Naive thymus-derived CD4-positive, alpha-beta T cell (primary cell): ENCODE measurements at regions of chr5 and their contacts with region 1.

Region 1: GRCh38 chr5:142769741-142770631 is at the start of gene ARHGAP26:
- DNase-seq: peak; percentile 82 to 93 (median 87)
- ATAC-seq: peak; percentile 94
- H3K4me3 ChIP-seq: peak within 1 kb of the TSS; percentile 86
- H3K4me3 Mint-ChIP-seq: peak within 1 kb of the TSS; percentile 87 to 100 (median 96)
- H3K27ac ChIP-seq: peak within 1 kb of the TSS; percentile 77
- H3K27ac Mint-ChIP-seq: peak within 1 kb of the TSS; percentile 89 to 98 (median 92)
- H3K4me1 ChIP-seq: peaks cover 9 to 15% of the 10 kb centered on the region in 2 donors
- H3K4me1 Mint-ChIP-seq: peaks cover 30 to 39% (median 35%) of the 10 kb centered on the region in 7 donors
- H3K27me3 ChIP-seq: no peaks in the 10 kb centered on the region
- H3K27me3 Mint-ChIP-seq: peaks cover 0 to 3% (median 0%) of the 10 kb centered on the region in 5 donors
- total RNA-seq, gene ARHGAP26: 20.1 to 123 (median 29.1) TPM

Region 2: DNA sequence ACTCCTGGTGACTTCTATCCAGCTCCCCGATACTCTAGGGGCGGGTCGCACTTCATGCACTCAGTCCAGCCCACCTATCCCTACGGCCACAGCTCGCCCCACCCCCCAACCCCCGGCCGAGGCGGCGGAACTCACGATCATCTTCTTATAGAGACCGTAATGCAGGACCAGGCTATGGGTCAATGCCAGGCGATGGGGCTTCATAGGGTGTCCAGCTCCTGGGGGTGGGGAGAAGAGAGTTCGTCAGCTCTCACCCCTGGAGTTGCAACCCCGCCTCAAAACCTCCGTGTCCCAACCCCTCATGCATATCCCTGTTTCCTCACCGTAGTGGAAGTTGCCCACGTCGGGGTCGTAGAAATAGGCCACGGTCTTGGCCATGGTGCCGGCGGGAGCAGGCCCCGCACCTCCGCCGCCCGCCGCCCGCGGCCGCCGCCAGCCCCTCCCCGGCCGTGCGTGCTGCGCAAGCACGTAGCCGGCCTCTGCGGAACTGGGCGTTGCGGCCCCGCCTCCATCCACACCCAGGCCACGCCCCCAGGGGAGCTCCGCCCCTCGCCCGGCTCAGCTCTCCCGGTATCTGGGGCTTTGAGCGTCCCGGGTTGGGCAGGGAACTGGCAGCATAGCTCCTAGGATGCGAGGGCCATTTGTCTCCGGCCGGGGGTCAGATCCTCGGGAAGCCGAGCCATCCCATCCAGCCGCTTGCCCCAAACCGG is 1133.4 kb before region 1 on chr5 and contains the starts of genes HDAC3 and RELL2:
- CTCF ChIA-PET with region 1: no interaction called
- POLR2A ChIA-PET with region 1: no interaction called
- intact Hi-C with region 1: loop called in 1 of 2 experiments (anchors 5 kb)
- DNase-seq: peak; percentile 86 to 99 (median 94)
- ATAC-seq: peak; percentile 98
- H3K4me3 ChIP-seq: peak within 1 kb of the TSS; percentile 81
- H3K4me3 Mint-ChIP-seq: peak within 1 kb of the TSS; percentile 89 to 98 (median 92)
- H3K27ac ChIP-seq: peak within 1 kb of the TSS; percentile 88
- H3K27ac Mint-ChIP-seq: peak within 1 kb of the TSS; percentile 72 to 95 (median 92)
- H3K4me1 ChIP-seq: peaks cover 23 to 24% of the 10 kb centered on the region in 2 donors
- H3K4me1 Mint-ChIP-seq: peaks cover 35 to 56% (median 46%) of the 10 kb centered on the region in 7 donors
- H3K27me3 ChIP-seq: no peaks in the 10 kb centered on the region
- H3K27me3 Mint-ChIP-seq: no peaks in the 10 kb centered on the region
- total RNA-seq, gene HDAC3: 70.0 to 92.8 (median 79.0) TPM
- total RNA-seq, gene RELL2: 14.3 to 21.7 (median 17.5) TPM

Region 3: DNA sequence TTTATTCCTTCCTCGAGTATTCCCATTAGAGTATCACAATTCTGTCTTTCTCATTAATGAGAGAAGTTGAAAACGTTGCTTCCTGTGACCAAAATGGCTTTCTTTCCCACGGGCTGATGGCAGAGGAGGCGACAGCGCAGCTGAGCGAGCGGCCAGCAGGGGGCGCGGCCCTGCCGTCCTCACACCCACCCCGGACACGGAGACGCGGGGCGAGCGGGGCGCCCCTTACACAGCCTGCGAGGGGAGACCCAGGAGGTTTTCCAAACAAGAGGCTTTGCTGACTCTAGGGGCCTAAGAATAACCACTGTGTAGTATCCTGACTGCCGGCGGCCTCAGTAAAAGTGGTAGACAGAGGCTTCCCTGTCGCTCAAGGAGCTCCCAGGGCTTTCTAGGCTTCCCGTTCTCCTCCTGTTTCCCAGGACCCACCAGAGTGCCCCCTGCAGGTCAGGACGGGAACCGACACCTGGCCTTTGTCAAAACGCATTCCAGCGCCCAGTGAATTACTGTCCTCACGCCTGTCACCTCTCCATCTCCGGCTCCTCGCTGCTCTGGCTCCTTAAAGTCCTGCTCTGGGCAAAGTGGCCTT is 56.8 kb before region 1 on chr5:
- CTCF ChIA-PET with region 1: interaction called, 8 read pairs
- POLR2A ChIA-PET with region 1: interaction called, 3 read pairs
- intact Hi-C with region 1: loop called (anchors 1 kb)
- DNase-seq: peak; percentile 72 to 92 (median 86)
- ATAC-seq: peak; percentile 96
- H3K4me3 ChIP-seq: peak overlapping the region; percentile 61
- H3K4me3 Mint-ChIP-seq: peak overlapping the region; percentile 45 to 82 (median 70)
- H3K27ac ChIP-seq: no peak overlapping the region
- H3K27ac Mint-ChIP-seq: peak overlapping the region in 2 of 9 donors; percentile 39 to 73
- H3K4me1 ChIP-seq: peaks cover 0 to 7% of the 10 kb centered on the region in 2 donors
- H3K4me1 Mint-ChIP-seq: peaks cover 0 to 16% (median 10%) of the 10 kb centered on the region in 7 donors
- H3K27me3 ChIP-seq: no peaks in the 10 kb centered on the region
- H3K27me3 Mint-ChIP-seq: peaks cover 0 to 33% (median 4%) of the 10 kb centered on the region in 5 donors

Region 4: GRCh38 chr5:142800776-142801494 is 30.9 kb after region 1 on chr5:
- CTCF ChIA-PET with region 1: interaction called, 14 read pairs
- POLR2A ChIA-PET with region 1: interaction called, 81 read pairs
- intact Hi-C with region 1: loop called (anchors 1 kb)
- DNase-seq: peak in 8 of 9 donors; percentile 46 to 70 (median 64)
- ATAC-seq: peak; percentile 63
- H3K4me3 ChIP-seq: peak overlapping the region; percentile 41
- H3K4me3 Mint-ChIP-seq: peak overlapping the region; percentile 66 to 88 (median 79)
- H3K27ac ChIP-seq: peak overlapping the region; percentile 58
- H3K27ac Mint-ChIP-seq: peak overlapping the region; percentile 80 to 98 (median 93)
- H3K4me1 ChIP-seq: peaks cover 53 to 66% of the 10 kb centered on the region in 2 donors
- H3K4me1 Mint-ChIP-seq: peaks cover 53 to 71% (median 64%) of the 10 kb centered on the region in 7 donors
- H3K27me3 ChIP-seq: no peaks in the 10 kb centered on the region
- H3K27me3 Mint-ChIP-seq: no peaks in the 10 kb centered on the region

Region 5: GRCh38 chr5:142874537-142874936 is 104.6 kb after region 1 on chr5:
- CTCF ChIA-PET with region 1: interaction called, 32 read pairs
- POLR2A ChIA-PET with region 1: no interaction called
- intact Hi-C with region 1: no loop called
- DNase-seq: no peak
- ATAC-seq: no peak
- H3K4me3 ChIP-seq: no peak overlapping the region
- H3K4me3 Mint-ChIP-seq: no peak overlapping the region
- H3K27ac ChIP-seq: no peak overlapping the region
- H3K27ac Mint-ChIP-seq: no peak overlapping the region
- H3K4me1 ChIP-seq: no peaks in the 10 kb centered on the region
- H3K4me1 Mint-ChIP-seq: peaks cover 2 to 12% (median 4%) of the 10 kb centered on the region in 7 donors
- H3K27me3 ChIP-seq: no peaks in the 10 kb centered on the region
- H3K27me3 Mint-ChIP-seq: no peaks in the 10 kb centered on the region

Region 6: GRCh38 chr5:143033535-143034250 is 263.7 kb after region 1 on chr5:
- CTCF ChIA-PET with region 1: no interaction called
- POLR2A ChIA-PET with region 1: no interaction called
- intact Hi-C with region 1: no loop called
- DNase-seq: no peak
- ATAC-seq: no peak
- H3K4me3 ChIP-seq: no peak overlapping the region
- H3K4me3 Mint-ChIP-seq: no peak overlapping the region
- H3K27ac ChIP-seq: no peak overlapping the region
- H3K27ac Mint-ChIP-seq: no peak overlapping the region
- H3K4me1 ChIP-seq: peaks cover 17 to 24% of the 10 kb centered on the region in 2 donors
- H3K4me1 Mint-ChIP-seq: peaks cover 23 to 49% (median 32%) of the 10 kb centered on the region in 7 donors
- H3K27me3 ChIP-seq: no peaks in the 10 kb centered on the region
- H3K27me3 Mint-ChIP-seq: no peaks in the 10 kb centered on the region

Region 7: DNA sequence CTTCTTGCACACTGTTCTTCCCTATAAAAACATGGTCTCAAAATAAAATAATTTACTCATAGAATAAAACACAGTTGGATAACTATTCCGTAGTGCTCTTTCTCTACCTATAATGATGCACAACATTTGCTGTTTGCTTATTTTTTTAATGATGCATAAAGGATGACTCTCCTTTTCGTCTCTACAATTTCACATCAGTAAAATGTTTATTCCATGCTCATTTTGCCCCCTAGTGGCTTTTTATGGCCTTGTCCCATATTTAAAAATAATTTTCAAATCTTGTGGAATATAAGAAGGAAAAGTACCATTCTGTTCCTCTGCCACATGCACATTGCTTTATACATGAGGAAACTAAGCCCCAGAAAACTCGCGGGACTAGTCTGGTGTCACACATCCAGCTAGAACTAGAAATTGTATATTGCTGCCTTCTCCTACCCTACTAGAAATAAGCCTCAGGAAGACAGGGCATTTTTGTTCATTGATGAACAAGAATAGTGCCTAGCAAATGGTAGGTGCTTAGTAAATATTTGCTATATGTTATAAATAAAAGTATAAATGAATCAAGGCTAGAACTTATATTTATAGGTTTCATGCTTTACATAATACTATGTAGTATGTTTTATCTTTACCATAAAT is 1413.4 kb after region 1 on chr5:
- CTCF ChIA-PET with region 1: no interaction called
- POLR2A ChIA-PET with region 1: no interaction called
- intact Hi-C with region 1: loop called (anchors 1 to 2 kb)
- DNase-seq: peak in 6 of 9 donors; percentile 17 to 42 (median 34)
- ATAC-seq: no peak
- H3K4me3 ChIP-seq: no peak overlapping the region
- H3K4me3 Mint-ChIP-seq: no peak overlapping the region
- H3K27ac ChIP-seq: no peak overlapping the region
- H3K27ac Mint-ChIP-seq: peak overlapping the region in 5 of 9 donors; percentile 15 to 71 (median 49)
- H3K4me1 ChIP-seq: peaks cover 19 to 41% of the 10 kb centered on the region in 2 donors
- H3K4me1 Mint-ChIP-seq: peaks cover 19 to 56% (median 43%) of the 10 kb centered on the region in 7 donors
- H3K27me3 ChIP-seq: no peaks in the 10 kb centered on the region
- H3K27me3 Mint-ChIP-seq: peaks cover 0 to 2% (median 0%) of the 10 kb centered on the region in 5 donors